Common myeloid progenitor, CD34-positive (primary cell): ENCODE measurements at regions of chr1 and their contacts with region 1.

Region 1: DNA sequence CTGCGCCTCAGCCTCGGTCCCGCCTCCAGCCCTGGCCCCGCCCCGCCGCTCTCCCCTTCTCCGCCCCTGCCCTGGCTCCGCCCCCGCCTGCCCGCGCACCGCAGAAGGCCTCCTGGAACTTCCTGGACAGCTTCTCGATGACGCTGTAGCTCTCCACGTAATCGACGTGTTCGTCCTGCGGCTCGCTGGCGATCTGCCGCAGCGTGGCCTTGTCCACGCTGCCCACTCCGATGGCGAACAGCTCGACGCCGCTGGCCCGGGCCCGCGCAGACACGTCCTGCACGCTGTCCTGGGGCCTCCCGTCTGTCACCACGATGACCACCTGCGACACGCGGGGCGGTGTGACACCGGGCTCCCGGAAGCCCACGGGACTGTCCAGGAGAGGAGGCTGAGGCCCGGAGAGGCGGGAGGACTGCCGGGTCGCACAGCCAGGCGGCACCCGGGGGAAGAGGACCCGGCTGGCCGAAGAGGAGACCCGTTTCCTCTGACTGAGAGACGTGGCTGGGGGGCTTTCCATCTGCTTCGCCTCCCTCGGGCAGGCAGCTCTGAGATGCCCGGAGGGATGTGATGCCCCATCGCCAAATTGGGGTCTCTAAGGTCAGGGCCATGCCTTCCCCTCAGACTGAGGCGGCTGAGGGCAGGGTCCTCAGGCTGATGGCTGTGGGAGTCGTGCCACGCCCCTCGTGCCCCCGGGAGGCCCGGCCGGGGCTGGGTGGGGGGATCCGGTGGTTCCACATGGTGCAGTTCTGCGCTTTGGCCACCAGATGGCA is 4.6 kb downstream of the MATN1 start:
- DNase-seq: peak; percentile 94 to 96 (median 96)
- H3K4me3 ChIP-seq: peak overlapping the region; percentile 51 to 80 (median 67)
- H3K27ac ChIP-seq: peak overlapping the region; percentile 85 to 93
- H3K4me1 ChIP-seq: peaks cover 0 to 28% (median 15%) of the 10 kb centered on the region in 4 experiments
- H3K27me3 ChIP-seq: peaks cover 0 to 2% (median 0%) of the 10 kb centered on the region in 5 experiments

Region 2: DNA sequence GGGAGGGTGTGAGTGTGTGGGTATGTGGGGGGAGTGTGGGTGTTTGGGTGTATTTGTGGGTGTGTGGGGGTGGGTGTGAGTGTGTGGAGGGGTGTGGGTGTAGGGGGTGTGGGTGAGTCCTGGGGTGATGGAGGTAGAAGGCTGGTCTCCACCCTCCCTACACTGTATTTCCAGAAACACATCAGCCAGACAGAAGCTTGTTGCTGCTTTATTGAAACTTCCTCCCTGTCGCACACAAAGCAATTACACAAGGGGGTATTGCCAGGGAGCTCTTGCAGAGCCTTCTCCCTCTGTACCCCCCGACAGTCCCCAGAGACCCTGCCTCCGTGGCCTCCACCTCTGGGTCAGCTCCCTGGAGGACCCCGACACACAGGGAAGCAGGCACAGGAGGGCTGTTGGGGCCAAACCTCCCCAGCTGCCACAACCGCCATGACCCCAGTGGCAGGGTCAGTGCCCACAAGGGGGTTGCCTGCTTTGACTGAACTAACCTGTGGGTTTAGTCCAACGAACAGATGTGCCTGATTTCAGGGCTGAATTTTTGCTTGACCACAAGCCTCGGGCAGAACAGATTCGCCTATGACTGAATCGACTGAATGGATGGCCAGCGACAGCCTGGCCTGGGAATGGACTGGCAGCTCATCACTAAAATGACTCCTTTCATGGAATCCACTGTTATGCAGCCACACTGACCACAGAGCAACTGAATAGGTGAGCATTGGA is 13.6 kb after region 1 on chr1:
- CTCF ChIA-PET with region 1: interaction called, 82 read pairs
- POLR2A ChIA-PET with region 1: interaction called, 6 read pairs
- DNase-seq: peak; percentile 38 to 78 (median 64)
- H3K4me3 ChIP-seq: no peak overlapping the region
- H3K27ac ChIP-seq: no peak overlapping the region
- H3K4me1 ChIP-seq: peaks cover 0 to 16% (median 5%) of the 10 kb centered on the region in 4 experiments
- H3K27me3 ChIP-seq: no peaks in the 10 kb centered on the region

Region 3: GRCh38 chr1:30743584-30744059 is 24.8 kb after region 1 on chr1:
- CTCF ChIA-PET with region 1: interaction called, 19 read pairs
- POLR2A ChIA-PET with region 1: interaction called, 3 read pairs
- DNase-seq: peak; percentile 90 to 98 (median 97)
- H3K4me3 ChIP-seq: peak overlapping the region in 2 of 7 experiments; percentile 0 to 20
- H3K27ac ChIP-seq: peak overlapping the region in 1 of 2 experiments; percentile 56
- H3K4me1 ChIP-seq: peaks cover 14 to 98% (median 93%) of the 10 kb centered on the region in 4 experiments
- H3K27me3 ChIP-seq: no peaks in the 10 kb centered on the region

Region 4: DNA sequence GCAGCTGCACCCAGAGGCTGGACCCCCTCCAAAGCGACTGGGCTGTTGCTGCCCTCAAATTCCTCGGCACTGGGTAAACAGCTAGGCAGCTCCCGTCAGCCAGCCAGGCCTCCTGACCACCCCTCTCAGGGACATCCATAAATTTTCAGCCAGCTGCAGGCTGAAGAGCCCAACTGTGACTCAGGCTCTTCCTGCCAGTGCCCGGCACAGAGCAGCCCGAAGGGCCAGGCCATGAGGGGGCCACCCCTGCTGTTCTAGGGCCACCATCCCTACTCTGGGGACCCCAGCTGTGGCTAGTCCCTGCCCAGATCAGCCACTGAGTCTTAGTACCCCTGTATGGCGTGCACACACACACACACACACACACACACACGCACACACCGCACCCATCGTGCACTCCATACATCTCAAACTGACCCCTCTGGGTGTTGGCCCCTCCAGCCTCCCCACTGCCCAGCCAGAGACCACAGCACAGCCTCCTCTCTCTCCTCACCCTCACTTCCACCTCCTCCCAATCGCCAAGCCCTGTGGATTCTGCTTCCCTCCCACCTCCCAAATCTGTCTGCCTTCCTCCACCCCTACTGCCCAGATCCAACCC is 44.9 kb after region 1 on chr1:
- CTCF ChIA-PET with region 1: interaction called, 43 read pairs
- POLR2A ChIA-PET with region 1: interaction called, 4 read pairs
- DNase-seq: no peak
- H3K4me3 ChIP-seq: no peak overlapping the region
- H3K27ac ChIP-seq: no peak overlapping the region
- H3K4me1 ChIP-seq: peaks cover 24 to 73% (median 71%) of the 10 kb centered on the region in 4 experiments
- H3K27me3 ChIP-seq: no peaks in the 10 kb centered on the region

Region 5: GRCh38 chr1:30911046-30911954 is 192.5 kb after region 1 on chr1:
- CTCF ChIA-PET with region 1: interaction called, 54 read pairs
- POLR2A ChIA-PET with region 1: interaction called, 4 read pairs
- DNase-seq: peak; percentile 62 to 76 (median 69)
- H3K4me3 ChIP-seq: no peak overlapping the region
- H3K27ac ChIP-seq: no peak overlapping the region
- H3K4me1 ChIP-seq: peaks cover 0 to 29% (median 16%) of the 10 kb centered on the region in 4 experiments
- H3K27me3 ChIP-seq: peaks cover 0 to 44% (median 33%) of the 10 kb centered on the region in 5 experiments